ENCODE measurements at regions of chr16 and their contacts with region 1.

Region 1: GRCh38 chr16:89060207-89060794 is 33.4 kb upstream of the ACSF3 start:
- DNase-seq: peak; percentile 55
- ATAC-seq: peak; percentile 81
- H3K4me3 Mint-ChIP-seq: peak overlapping the region; percentile 68
- H3K27ac Mint-ChIP-seq: peak overlapping the region; percentile 89
- H3K4me1 Mint-ChIP-seq: peaks cover 50% of the 10 kb centered on the region
- H3K27me3 Mint-ChIP-seq: no peaks in the 10 kb centered on the region
- CTCF ChIP-seq: no peak

Region 2: GRCh38 chr16:89020068-89020924 is 40.0 kb before region 1 on chr16:
- CTCF ChIA-PET with region 1: no interaction called
- POLR2A ChIA-PET with region 1: interaction called, 10 read pairs
- intact Hi-C with region 1: no loop called
- DNase-seq: no peak
- ATAC-seq: no peak
- H3K4me3 Mint-ChIP-seq: no peak overlapping the region
- H3K27ac Mint-ChIP-seq: no peak overlapping the region
- H3K4me1 Mint-ChIP-seq: no peaks in the 10 kb centered on the region
- H3K27me3 Mint-ChIP-seq: peaks cover 14% of the 10 kb centered on the region
- CTCF ChIP-seq: no peak

Measured in activated B cell treated with CpG ODN at 0.5 μM for 24 hours (primary cell).